ENCODE measurements at regions of chr1 and their contacts with region 1.

Region 1: GRCh38 chr1:229661022-229661877 is 35.2 kb downstream of the URB2 start:
- DNase-seq: peak; percentile 74 to 96 (median 89)

Region 2: DNA sequence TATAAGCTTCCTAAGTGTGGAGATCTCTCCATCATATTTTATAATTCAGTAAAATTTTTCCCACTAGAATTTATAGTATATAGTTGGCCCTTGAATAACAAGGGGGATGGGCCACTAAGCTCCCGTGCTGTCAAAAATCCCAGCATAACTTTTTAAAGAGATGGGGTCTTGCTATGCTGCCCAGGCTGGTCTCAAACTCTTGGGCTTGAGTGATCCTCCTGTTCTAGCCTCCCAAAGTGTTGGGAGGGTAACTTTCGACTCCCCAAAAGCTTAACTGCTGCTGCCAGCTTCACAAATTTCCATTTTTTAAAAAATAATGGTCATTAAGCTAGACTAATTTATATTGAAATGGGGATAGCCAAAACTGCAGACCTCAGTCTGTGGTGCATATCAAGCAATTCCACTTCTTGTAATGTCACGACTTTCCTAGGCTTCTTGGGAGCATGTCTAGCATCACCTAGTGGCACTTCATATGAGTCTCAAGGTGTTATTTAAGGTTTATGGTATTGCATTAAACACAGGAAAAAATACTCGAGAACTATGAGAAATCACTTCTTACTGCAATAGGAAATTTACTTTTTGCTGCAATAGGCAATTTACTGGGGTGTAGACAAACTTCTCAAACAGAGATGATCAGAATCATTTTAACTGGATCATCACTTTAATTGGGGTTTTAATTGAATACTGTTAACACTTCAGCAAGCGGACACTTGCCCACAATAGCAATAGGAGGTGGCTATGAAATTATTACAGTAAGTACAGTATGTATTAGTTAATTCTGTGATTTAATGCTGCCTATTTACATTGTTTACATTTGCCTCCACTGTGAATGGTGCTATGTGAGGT is 208.1 kb before region 1 on chr1:
- intact Hi-C with region 1: no loop called
- DNase-seq: peak in 2 of 42 donors; percentile 16 to 37

Region 3: GRCh38 chr1:229507951-229508822 is 153.1 kb before region 1 on chr1 and contains the start of gene NUP133:
- intact Hi-C with region 1: no loop called
- DNase-seq: peak; percentile 96 to 100 (median 99)

Region 4: DNA sequence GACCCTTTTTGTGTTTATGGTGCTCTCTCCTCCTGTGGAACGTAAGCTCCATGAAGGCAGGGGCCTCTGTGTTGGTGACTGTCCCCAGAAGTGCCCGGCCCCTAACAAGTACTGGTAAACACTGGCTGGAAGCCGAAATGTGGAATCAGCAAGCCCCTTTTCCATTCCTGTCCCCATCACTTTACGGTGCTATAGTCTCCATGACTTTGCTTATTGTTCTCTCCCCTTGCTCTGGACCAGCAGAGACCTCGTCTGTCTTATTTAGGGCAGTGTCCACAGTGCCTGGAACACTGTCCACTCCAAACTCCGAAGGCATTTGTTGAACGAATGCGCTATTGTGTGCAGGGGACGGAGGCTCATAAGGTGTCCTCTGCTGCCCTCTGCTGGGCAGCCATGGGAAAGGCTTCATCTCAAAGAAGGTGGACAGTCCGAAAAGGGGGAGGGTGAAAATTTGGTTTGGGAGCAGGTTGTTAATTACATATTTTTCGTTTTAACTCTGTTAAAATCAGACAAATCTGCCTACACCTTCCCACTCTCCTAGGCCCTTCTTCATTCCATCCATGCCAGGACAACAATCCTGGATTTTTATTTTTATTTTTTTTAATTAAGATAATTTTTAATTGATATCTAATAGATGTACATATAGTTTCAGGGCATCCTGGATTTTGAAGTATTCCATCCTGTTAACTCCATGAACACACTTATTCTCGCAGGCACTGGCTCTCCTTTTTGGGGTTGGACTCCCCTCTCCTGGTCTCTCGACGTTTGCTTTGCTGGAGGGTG is 649.3 kb after region 1 on chr1:
- intact Hi-C with region 1: loop called (anchors 10 kb)
- DNase-seq: peak; percentile 47 to 93 (median 82)

Measured in head of caudate nucleus (tissue), 42 donors.